Activated T-helper 2 cell treated with anti-CD3 and anti-CD28 coated beads, Interferon-gamma antibody, Interleukin-2, Interleukin-4, amounts not matched to agents 10 μg/mL and 5 μg/mL and 100 μg/mL, durations not matched to agents 14 hours and 24 hours and 36 hours (primary cell): ENCODE measurements at regions of chr6 and their contacts with region 1.

Region 1: DNA sequence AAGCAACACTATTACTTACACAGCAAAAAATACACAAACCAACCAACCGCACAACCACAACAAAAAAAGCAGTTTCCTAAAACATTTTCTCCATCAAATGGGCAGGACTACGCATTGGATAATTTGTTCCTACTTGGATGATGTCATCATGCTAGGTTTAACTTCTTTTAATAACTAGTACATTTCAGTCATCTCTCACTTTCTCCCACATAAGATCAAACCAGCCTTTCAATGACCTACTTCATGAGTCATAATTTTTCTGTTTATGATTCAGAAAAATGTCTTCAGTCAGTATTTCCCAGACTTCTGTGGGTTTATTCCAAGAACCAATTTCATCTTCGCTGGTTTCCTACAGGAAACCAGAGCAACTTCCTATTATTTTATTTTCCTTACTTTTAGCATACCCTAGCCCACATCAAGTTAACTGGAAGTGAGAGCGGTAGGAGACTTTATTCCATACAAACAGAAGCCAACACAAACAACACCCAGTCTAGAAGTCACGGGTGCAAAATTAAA is 134.2 kb downstream of the GMDS start:
- DNase-seq: no peak
- H3K4me3 Mint-ChIP-seq: peak overlapping the region; percentile 64
- H3K27ac Mint-ChIP-seq: peak overlapping the region; percentile 88
- H3K4me1 Mint-ChIP-seq: peaks cover 27% of the 10 kb centered on the region
- H3K27me3 Mint-ChIP-seq: peaks cover 2% of the 10 kb centered on the region

Region 2: GRCh38 chr6:2081155-2082138 is 29.8 kb before region 1 on chr6:
- intact Hi-C with region 1: loop called (anchors 2 kb)
- DNase-seq: peak; percentile 14
- H3K4me3 Mint-ChIP-seq: no peak overlapping the region
- H3K27ac Mint-ChIP-seq: peak overlapping the region; percentile 24
- H3K4me1 Mint-ChIP-seq: peaks cover 37% of the 10 kb centered on the region
- H3K27me3 Mint-ChIP-seq: peaks cover 24% of the 10 kb centered on the region

Region 3: DNA sequence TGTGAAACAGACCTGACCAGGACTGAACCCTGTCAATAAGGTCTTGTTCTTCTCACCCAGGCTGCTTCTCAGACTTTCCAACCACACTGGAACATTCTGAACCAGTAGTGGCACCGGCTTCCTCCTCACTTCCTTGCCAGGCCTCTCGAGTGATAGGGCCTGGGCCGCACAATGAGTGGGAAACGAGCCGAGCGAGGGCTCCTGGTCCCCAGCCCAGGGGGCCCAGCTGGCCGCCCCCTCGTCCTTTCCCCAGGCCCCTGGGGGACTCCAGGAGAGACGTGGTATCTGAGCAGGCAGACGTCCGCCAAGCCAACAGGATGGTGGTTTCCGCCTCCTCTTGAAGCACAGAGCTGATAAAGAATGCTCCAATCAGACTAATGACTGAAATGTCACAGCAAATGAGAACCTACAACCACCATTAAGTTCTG is 16.3 kb after region 1 on chr6:
- intact Hi-C with region 1: loop called (anchors 1 kb)
- DNase-seq: no peak
- H3K4me3 Mint-ChIP-seq: no peak overlapping the region
- H3K27ac Mint-ChIP-seq: peak overlapping the region; percentile 77
- H3K4me1 Mint-ChIP-seq: peaks cover 34% of the 10 kb centered on the region
- H3K27me3 Mint-ChIP-seq: peaks cover 5% of the 10 kb centered on the region

Region 4: DNA sequence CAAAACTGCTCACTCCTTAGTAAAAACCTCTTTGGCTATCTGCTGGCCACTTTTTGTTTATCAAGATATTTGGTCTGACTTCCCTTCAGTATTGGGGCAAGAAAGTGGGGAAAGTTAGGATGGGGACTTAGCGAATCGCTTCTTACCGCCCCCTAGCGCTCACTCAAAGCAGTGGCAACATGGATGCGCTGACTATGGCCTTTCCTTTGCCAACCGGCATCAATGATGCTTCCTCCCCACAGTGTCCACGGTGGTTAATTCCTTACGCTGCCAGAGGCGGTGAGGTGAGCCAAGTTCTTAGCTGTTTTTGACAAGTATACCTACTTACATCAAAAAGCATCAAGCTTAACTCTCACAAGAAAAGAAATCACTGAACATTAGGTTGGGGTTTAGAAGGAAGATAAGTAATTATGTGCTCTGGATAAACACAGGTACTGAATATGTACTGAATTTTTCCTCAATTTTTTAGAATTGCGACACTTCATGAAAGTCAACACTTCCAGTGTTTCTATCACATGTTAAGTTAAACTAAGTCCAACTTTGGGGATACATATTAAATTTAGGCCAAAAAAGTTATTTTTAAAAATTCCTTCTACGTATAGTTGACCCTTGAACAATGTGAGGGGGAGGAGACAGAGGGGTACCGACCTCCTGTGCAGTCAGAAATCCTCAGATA is 47.5 kb after region 1 on chr6:
- intact Hi-C with region 1: loop called (anchors 1 kb)
- DNase-seq: no peak
- H3K4me3 Mint-ChIP-seq: no peak overlapping the region
- H3K27ac Mint-ChIP-seq: no peak overlapping the region
- H3K4me1 Mint-ChIP-seq: peaks cover 41% of the 10 kb centered on the region
- H3K27me3 Mint-ChIP-seq: peaks cover 18% of the 10 kb centered on the region

Region 5: GRCh38 chr6:2186516-2186915 is 75.3 kb after region 1 on chr6:
- intact Hi-C with region 1: loop called (anchors 1 kb)
- DNase-seq: no peak
- H3K4me3 Mint-ChIP-seq: no peak overlapping the region
- H3K27ac Mint-ChIP-seq: no peak overlapping the region
- H3K4me1 Mint-ChIP-seq: peaks cover 22% of the 10 kb centered on the region
- H3K27me3 Mint-ChIP-seq: peaks cover 26% of the 10 kb centered on the region

Region 6: GRCh38 chr6:2245094-2245876 is 134.1 kb after region 1 on chr6 and contains the start of gene GMDS:
- intact Hi-C with region 1: loop called (anchors 2 kb)
- DNase-seq: peak; percentile 79
- H3K4me3 Mint-ChIP-seq: peak within 1 kb of the TSS; percentile 90
- H3K27ac Mint-ChIP-seq: peak within 1 kb of the TSS; percentile 94
- H3K4me1 Mint-ChIP-seq: peaks cover 65% of the 10 kb centered on the region
- H3K27me3 Mint-ChIP-seq: no peaks in the 10 kb centered on the region
- total RNA-seq, gene GMDS: 35.7 and 36.9 TPM in 2 replicates

Region 7: GRCh38 chr6:2542858-2543218 is 431.6 kb after region 1 on chr6:
- intact Hi-C with region 1: loop called (anchors 10 kb)
- DNase-seq: peak; percentile 74
- H3K4me3 Mint-ChIP-seq: no peak overlapping the region
- H3K27ac Mint-ChIP-seq: peak overlapping the region; percentile 18
- H3K4me1 Mint-ChIP-seq: peaks cover 32% of the 10 kb centered on the region
- H3K27me3 Mint-ChIP-seq: peaks cover 64% of the 10 kb centered on the region